ENCODE measurements at regions of chrX and their contacts with region 1.

Region 1: DNA sequence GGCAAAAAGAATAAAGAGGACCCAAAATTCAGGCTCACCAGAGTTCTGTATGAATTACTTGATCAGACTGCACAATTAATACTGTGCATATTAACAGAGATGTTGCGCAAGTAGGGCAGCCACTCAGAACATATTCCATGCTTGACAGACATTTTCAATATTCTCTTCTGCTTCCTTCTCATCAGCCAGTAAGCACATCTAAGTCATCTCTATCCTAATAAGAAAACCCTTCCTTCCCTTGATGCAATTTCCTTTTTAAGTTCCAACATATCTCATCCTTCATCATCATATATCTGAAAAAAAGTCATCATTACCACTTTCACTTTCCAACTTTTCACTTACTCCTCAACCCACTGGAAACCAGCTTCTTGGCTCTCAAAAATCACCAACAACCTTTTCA is 14.3 kb downstream of the MBNL3 start:
- DNase-seq: no peak
- ATAC-seq: no peak
- H3K4me3 ChIP-seq: no peak overlapping the region
- H3K27ac ChIP-seq: no peak overlapping the region
- H3K4me1 ChIP-seq: peaks cover 0 to under 1% (median 0%) of the 10 kb centered on the region in 12 donors
- H3K27me3 ChIP-seq: peaks cover 0 to 23% (median 0%) of the 10 kb centered on the region in 9 donors
- CTCF ChIP-seq: no peak
- POLR2A ChIP-seq: no peak

Region 2: DNA sequence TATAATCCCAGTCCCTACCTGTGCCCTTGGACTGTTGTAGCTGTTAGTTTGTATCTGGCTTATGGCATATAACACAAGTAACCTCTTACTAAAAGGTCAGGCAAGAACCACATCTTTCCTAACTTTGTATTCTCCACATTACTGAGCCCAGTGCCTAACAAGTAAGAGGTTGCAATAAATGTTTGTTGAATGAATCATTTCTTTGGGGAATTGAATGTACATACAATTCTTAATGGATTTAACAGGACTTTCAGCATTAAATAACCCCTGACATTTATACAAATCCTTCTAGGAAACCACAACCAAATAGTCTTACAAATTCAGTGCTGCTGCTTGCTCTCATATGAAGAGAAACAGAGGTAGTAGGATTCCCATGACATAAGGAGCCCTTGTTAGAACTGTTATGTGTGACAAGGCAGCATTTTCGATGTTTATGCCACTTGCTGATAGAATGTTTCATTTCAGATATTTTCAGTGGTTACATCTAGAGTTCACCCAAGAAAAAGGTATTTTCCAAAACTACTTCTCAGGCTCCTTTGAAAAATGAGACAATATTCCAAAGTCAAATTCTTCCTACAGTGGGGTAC is 47.7 kb before region 1 on chrX:
- intact Hi-C with region 1: loop called in 1 of 10 experiments (anchors 10 kb)
- DNase-seq: no peak
- ATAC-seq: no peak
- H3K4me3 ChIP-seq: no peak overlapping the region
- H3K27ac ChIP-seq: no peak overlapping the region
- H3K4me1 ChIP-seq: no peaks in the 10 kb centered on the region
- H3K27me3 ChIP-seq: peaks cover 0 to 7% (median 0%) of the 10 kb centered on the region in 9 donors
- CTCF ChIP-seq: no peak
- POLR2A ChIP-seq: no peak